HepG2 (cell line): ENCODE measurements at regions of chr16 and their contacts with region 1.

Region 1: GRCh38 chr16:8963825-8964441 is at the start of gene USP7:
- DNase-seq: peak; percentile 86
- ATAC-seq: peak; percentile 73
- H3K4me3 ChIP-seq: peak within 1 kb of the TSS; percentile 74 to 90 (median 82)
- H3K27ac ChIP-seq: peak within 1 kb of the TSS; percentile 74
- H3K4me1 ChIP-seq: peaks cover 55% of the 10 kb centered on the region
- H3K27me3 ChIP-seq: no peaks in the 10 kb centered on the region; a peak in 2 of 5 replicates
- CTCF ChIP-seq: no peak
- EP300 ChIP-seq: peak in 1 of 2 experiments; percentile 52; a peak in 1 of 4 replicates
- POLR2A ChIP-seq: peak; percentile 22 to 79; a peak in 2 of 4 replicates
- RAD21 ChIP-seq: peak; percentile 80; the same call in 1 of the 2 replicates
- total RNA-seq, gene USP7: 173 and 177 TPM in 2 replicates

Region 2: GRCh38 chr16:8885674-8886592 is 78.0 kb before region 1 on chr16:
- CTCF ChIA-PET with region 1: no interaction called
- POLR2A ChIA-PET with region 1: no interaction called
- in situ Hi-C with region 1: no loop called
- intact Hi-C with region 1: no loop called
- DNase-seq: peak; percentile 46
- ATAC-seq: peak; percentile 45
- H3K4me3 ChIP-seq: peak overlapping the region in 2 of 3 experiments; percentile 24 to 73; a peak in 3 of 6 replicates
- H3K27ac ChIP-seq: no peak overlapping the region
- H3K4me1 ChIP-seq: peaks cover 58% of the 10 kb centered on the region
- H3K27me3 ChIP-seq: no peaks in the 10 kb centered on the region
- CTCF ChIP-seq: peak; percentile 58
- EP300 ChIP-seq: no peak
- POLR2A ChIP-seq: peak in 1 of 2 experiments; percentile 33; a peak in 1 of 4 replicates
- RAD21 ChIP-seq: no peak; the same call in 1 of the 2 replicates

Region 3: DNA sequence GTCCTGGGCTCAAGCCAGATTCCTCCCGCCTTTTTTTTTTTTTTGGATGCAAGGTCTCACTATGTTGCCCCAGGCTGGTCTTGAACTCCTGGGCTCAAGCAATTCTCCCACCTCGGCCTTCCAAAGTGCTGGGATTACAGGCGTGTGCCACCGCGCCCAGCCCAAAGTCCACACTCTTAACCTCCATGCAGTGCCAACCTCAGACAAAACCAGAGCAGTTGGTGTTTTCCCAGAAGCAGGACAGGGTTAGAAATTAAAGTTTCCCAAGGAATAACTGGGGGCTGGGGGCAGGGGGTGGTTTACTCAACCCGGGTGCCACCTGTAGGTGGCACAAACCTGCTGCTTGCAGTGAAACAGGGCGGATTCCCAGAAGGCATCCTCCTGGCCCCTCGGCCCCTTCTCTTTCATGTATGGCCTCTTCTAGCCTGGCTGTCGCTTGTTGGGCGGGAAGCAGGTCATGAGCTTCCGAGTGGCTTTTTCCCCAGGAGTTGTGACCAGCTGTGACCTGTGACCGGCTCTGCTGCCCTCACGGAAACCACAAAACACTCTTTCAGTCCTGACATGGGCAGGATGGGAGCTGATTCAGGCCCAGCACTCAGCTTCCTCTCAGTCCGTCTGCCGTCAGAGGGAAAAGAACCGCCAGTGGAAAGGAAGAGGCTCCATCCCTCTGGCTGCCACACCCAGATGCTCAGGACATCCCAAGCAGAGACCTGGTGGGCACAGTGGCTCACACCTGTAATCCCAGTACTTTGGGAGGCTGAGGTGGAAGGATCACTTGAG is 25.4 kb after region 1 on chr16:
- CTCF ChIA-PET with region 1: no interaction called
- POLR2A ChIA-PET with region 1: interaction called, 24 read pairs
- in situ Hi-C with region 1: no loop called
- intact Hi-C with region 1: loop called (anchors 1 kb)
- DNase-seq: peak; percentile 88
- ATAC-seq: peak; percentile 37
- H3K4me3 ChIP-seq: peak overlapping the region in 2 of 3 experiments; percentile 8 to 45; a peak in 2 of 6 replicates
- H3K27ac ChIP-seq: peak overlapping the region; percentile 83
- H3K4me1 ChIP-seq: peaks cover 78% of the 10 kb centered on the region
- H3K27me3 ChIP-seq: no peaks in the 10 kb centered on the region
- CTCF ChIP-seq: no peak; the same call in 1 of the 2 replicates
- EP300 ChIP-seq: no peak; a peak in 1 of 4 replicates
- POLR2A ChIP-seq: no peak
- RAD21 ChIP-seq: peak; percentile 38; the same call in 1 of the 2 replicates

Region 4: DNA sequence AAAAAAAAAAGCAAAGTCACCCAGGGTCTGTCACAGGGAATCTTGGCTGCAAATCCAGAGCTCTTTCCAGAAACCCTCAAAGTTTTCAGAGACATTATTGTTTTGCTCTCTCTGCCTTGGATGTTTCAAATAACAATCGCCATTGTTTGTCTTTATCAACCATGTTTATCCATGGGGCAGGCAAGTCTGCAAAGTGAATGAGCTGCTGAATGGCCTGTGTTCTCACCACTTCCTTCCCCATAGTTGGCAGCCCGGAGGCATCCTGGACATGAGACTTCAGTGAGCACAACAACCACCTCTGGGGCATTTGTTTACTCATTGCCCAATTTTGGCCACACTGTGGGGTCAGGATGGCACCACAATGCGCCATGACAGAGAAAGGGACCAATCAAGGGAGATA is 52.9 kb after region 1 on chr16:
- CTCF ChIA-PET with region 1: no interaction called
- POLR2A ChIA-PET with region 1: no interaction called
- in situ Hi-C with region 1: no loop called
- intact Hi-C with region 1: no loop called
- DNase-seq: no peak
- ATAC-seq: no peak
- H3K4me3 ChIP-seq: no peak overlapping the region
- H3K27ac ChIP-seq: no peak overlapping the region
- H3K4me1 ChIP-seq: peaks cover 23% of the 10 kb centered on the region
- H3K27me3 ChIP-seq: peaks cover 0 to 7% of the 10 kb centered on the region in 2 experiments; a peak in 3 of 5 replicates
- CTCF ChIP-seq: no peak
- EP300 ChIP-seq: no peak
- POLR2A ChIP-seq: no peak
- RAD21 ChIP-seq: no peak